ENCODE measurements at regions of chr3 and their contacts with region 1.

Region 1: DNA sequence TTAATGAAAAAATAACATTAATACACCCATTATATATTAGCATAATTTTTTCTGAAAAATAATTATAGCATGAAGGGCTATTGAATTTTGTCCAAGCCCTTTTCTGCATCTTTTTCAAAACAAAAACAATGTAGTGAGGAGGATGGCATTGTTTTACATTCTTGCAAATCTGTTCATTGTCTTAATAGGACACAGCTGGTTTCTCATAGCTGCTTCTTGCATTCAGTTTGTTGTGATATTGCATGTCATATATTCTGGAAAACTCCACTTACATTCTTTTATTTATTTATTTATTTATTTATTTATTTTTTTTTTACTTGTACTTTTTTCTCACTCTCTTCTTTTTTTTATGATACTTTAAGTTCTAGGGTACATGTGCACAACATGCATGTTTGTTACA is 107.4 kb downstream of the NR1D2 start:
- DNase-seq: no peak
- H3K4me3 ChIP-seq: no peak overlapping the region
- H3K27ac ChIP-seq: no peak overlapping the region
- H3K4me1 ChIP-seq: peaks cover 15% of the 10 kb centered on the region
- H3K27me3 ChIP-seq: no peaks in the 10 kb centered on the region
- CTCF ChIP-seq: no peak
- POLR2A ChIP-seq: no peak

Region 2: GRCh38 chr3:24004171-24004938 is 48.1 kb before region 1 on chr3:
- intact Hi-C with region 1: no loop called
- DNase-seq: peak in 1 of 2 donors; percentile 9
- H3K4me3 ChIP-seq: no peak overlapping the region
- H3K27ac ChIP-seq: no peak overlapping the region
- H3K4me1 ChIP-seq: no peaks in the 10 kb centered on the region
- H3K27me3 ChIP-seq: no peaks in the 10 kb centered on the region
- CTCF ChIP-seq: no peak
- POLR2A ChIP-seq: no peak

Region 3: GRCh38 chr3:24137958-24138875 is 85.8 kb after region 1 on chr3:
- intact Hi-C with region 1: loop called (anchors 5 kb)
- DNase-seq: no peak
- H3K4me3 ChIP-seq: no peak overlapping the region
- H3K27ac ChIP-seq: no peak overlapping the region
- H3K4me1 ChIP-seq: peaks cover 24% of the 10 kb centered on the region
- H3K27me3 ChIP-seq: no peaks in the 10 kb centered on the region
- CTCF ChIP-seq: no peak
- POLR2A ChIP-seq: no peak

Measured in vagina (tissue), 2 donors.